Right lobe of liver (tissue), 6 donors: ENCODE measurements at regions of chr9 and their contacts with region 1.

Region 1: GRCh38 chr9:94065535-94065961 is 18.7 kb upstream of the PTPDC1 start:
- DNase-seq: peak; percentile 61 to 69 (median 62)
- ATAC-seq: peak; percentile 81 to 88 (median 85)
- H3K4me3 ChIP-seq: no peak overlapping the region
- H3K27ac ChIP-seq: no peak overlapping the region
- H3K4me1 ChIP-seq: no peaks in the 10 kb centered on the region
- H3K27me3 ChIP-seq: no peaks in the 10 kb centered on the region
- CTCF ChIP-seq: peak; percentile 83 to 92 (median 90)
- POLR2A ChIP-seq: no peak

Region 2: GRCh38 chr9:94014065-94014654 is 51.4 kb before region 1 on chr9:
- intact Hi-C with region 1: no loop called
- DNase-seq: no peak
- ATAC-seq: peak; percentile 61 to 70 (median 66)
- H3K4me3 ChIP-seq: no peak overlapping the region
- H3K27ac ChIP-seq: no peak overlapping the region
- H3K4me1 ChIP-seq: no peaks in the 10 kb centered on the region
- H3K27me3 ChIP-seq: no peaks in the 10 kb centered on the region
- CTCF ChIP-seq: peak; percentile 52 to 70 (median 69)
- POLR2A ChIP-seq: no peak

Region 3: DNA sequence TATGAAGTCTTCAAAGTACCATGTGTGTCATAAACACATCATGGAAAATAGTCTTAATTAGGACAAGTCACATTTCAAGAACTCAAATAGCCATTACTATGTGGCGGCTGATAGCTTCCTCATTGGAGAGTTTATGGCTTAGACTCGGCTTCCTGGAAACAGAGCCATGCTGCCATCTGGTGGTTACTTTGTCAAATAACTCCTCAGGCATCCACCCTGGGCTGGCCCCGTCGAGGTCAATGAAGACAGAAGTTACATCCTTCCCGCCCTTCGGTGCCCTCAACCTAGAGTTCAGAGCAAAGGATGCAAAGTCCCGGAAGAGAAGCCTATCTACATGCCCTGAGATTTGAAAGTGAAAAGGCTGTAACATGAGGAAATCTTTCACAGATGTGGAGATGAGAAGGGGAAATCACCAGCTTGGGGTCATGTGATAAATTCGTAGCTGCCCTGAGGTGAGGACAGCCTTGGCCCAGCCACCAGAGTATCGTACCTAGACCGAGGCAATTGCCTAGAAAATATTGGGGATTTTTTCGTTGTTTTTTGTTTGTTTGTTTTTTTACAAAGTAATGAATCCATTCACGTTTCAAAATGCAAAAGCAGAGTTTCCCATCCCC is 148.1 kb after region 1 on chr9:
- intact Hi-C with region 1: loop called in 1 of 2 experiments (anchors 5 kb)
- DNase-seq: peak; percentile 57 to 73 (median 67)
- ATAC-seq: peak; percentile 98 to 99 (median 98)
- H3K4me3 ChIP-seq: no peak overlapping the region
- H3K27ac ChIP-seq: no peak overlapping the region
- H3K4me1 ChIP-seq: no peaks in the 10 kb centered on the region
- H3K27me3 ChIP-seq: no peaks in the 10 kb centered on the region
- CTCF ChIP-seq: peak; percentile 82 to 90 (median 86)
- POLR2A ChIP-seq: no peak